ENCODE measurements at regions of chr11 and their contacts with region 1.

Region 1: GRCh38 chr11:59776210-59777066 is 21.3 kb downstream of the STX3 start:
- DNase-seq: peak; percentile 90
- ATAC-seq: peak; percentile 88
- H3K4me3 ChIP-seq: no peak overlapping the region
- H3K27ac ChIP-seq: no peak overlapping the region
- H3K4me1 ChIP-seq: peaks cover 29% of the 10 kb centered on the region
- H3K27me3 ChIP-seq: no peaks in the 10 kb centered on the region
- CTCF ChIP-seq: no peak
- EP300 ChIP-seq: peak in 1 of 2 experiments; percentile 75; a peak in 2 of 4 replicates
- POLR2A ChIP-seq: no peak
- RAD21 ChIP-seq: no peak

Region 2: DNA sequence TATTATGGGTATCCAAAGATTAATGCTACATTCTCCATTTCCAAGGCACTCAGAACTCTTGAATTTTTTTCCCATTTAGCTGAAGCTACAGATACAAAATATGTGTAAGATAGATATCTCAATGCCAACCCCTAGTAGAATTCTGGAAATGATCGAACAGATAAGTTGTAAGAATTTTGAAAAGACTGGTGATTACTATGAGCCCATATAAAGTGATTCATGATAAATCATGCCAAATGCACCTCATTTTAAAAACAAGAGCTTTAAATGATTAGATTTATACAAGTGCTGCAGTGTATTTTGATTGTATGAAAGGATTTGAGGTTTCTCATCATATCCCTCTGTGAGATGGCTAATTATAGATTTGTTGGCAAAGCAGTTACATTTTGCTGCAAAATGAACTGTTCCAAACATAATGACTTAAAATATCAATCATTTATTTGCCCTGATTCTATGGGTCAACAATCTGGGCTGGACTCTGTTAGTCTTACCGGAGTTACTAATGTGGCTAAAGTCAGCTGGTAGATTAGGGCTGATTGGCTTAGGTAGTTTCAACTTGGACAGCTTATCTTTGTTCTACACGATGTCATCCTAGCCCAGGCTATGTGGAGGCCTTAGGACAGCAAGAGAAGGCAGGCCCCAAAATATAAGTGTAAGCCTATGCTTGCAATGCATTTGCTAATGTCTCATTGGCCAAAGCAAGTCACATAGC is 66.1 kb before region 1 on chr11:
- CTCF ChIA-PET with region 1: no interaction called
- POLR2A ChIA-PET with region 1: no interaction called
- in situ Hi-C with region 1: no loop called
- intact Hi-C with region 1: no loop called
- DNase-seq: no peak
- ATAC-seq: no peak
- H3K4me3 ChIP-seq: no peak overlapping the region
- H3K27ac ChIP-seq: no peak overlapping the region
- H3K4me1 ChIP-seq: peaks cover 9% of the 10 kb centered on the region
- H3K27me3 ChIP-seq: no peaks in the 10 kb centered on the region; a peak in 1 of 5 replicates
- CTCF ChIP-seq: no peak
- EP300 ChIP-seq: no peak
- POLR2A ChIP-seq: no peak
- RAD21 ChIP-seq: no peak

Region 3: DNA sequence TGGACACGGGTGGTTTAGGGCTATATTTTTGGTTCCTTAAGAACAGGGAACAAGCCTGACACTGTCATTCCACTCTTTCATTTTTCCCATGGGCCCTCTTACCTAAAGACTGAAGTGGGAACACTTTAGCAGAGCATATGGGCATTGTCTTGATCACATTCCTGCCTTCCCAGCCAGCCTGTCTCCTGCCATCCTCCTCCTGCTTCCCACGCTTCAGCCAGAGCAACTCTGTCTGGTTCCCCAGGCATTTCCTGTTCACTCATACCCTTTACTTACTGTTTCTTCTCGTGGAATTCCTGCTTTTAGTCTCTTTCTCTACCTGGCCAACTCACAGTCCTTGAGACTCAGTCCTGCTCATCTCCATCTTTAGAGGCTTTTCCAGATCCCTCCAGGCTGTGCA is 11.4 kb after region 1 on chr11:
- CTCF ChIA-PET with region 1: no interaction called
- POLR2A ChIA-PET with region 1: interaction called, 5 read pairs
- in situ Hi-C with region 1: no loop called
- intact Hi-C with region 1: loop called (anchors 1 kb)
- DNase-seq: no peak
- ATAC-seq: no peak
- H3K4me3 ChIP-seq: no peak overlapping the region
- H3K27ac ChIP-seq: no peak overlapping the region
- H3K4me1 ChIP-seq: peaks cover 15% of the 10 kb centered on the region
- H3K27me3 ChIP-seq: no peaks in the 10 kb centered on the region
- CTCF ChIP-seq: no peak
- EP300 ChIP-seq: no peak
- POLR2A ChIP-seq: no peak
- RAD21 ChIP-seq: no peak

Region 4: DNA sequence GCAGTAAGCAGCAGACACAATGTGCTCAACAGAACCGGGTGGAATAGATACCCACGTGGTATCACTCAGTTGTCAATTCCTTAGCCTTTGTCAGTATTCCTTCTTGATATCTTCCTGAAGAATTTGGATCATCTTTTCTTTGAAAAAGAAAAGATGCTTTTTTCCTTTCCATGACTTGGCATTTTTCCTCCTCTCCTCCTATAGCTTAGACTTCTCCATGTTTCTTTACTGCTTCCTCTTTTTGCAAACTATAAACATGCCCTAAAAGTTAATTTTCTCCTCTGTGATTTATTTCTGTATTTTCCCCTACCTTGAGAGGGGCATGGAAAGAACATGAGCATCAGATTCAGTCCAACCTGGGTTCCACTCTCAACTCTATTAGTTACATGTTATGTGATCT is 57.2 kb after region 1 on chr11:
- CTCF ChIA-PET with region 1: no interaction called
- POLR2A ChIA-PET with region 1: no interaction called
- in situ Hi-C with region 1: no loop called
- intact Hi-C with region 1: no loop called
- DNase-seq: no peak
- ATAC-seq: no peak
- H3K4me3 ChIP-seq: no peak overlapping the region
- H3K27ac ChIP-seq: no peak overlapping the region
- H3K4me1 ChIP-seq: no peaks in the 10 kb centered on the region
- H3K27me3 ChIP-seq: no peaks in the 10 kb centered on the region
- CTCF ChIP-seq: no peak
- EP300 ChIP-seq: no peak
- POLR2A ChIP-seq: no peak
- RAD21 ChIP-seq: no peak

Region 5: GRCh38 chr11:59849129-59849528 is 72.7 kb after region 1 on chr11:
- CTCF ChIA-PET with region 1: no interaction called
- POLR2A ChIA-PET with region 1: no interaction called
- in situ Hi-C with region 1: no loop called
- intact Hi-C with region 1: no loop called
- DNase-seq: no peak
- ATAC-seq: no peak
- H3K4me3 ChIP-seq: no peak overlapping the region
- H3K27ac ChIP-seq: no peak overlapping the region
- H3K4me1 ChIP-seq: no peaks in the 10 kb centered on the region
- H3K27me3 ChIP-seq: no peaks in the 10 kb centered on the region
- CTCF ChIP-seq: no peak
- EP300 ChIP-seq: no peak
- POLR2A ChIP-seq: no peak
- RAD21 ChIP-seq: no peak

Measured in HepG2 (cell line).